ENCODE measurements at regions of chr1 and their contacts with region 1.

Region 1: GRCh38 chr1:230632273-230632873 is 9.9 kb upstream of the COG2 start:
- DNase-seq: peak; percentile 85
- ATAC-seq: peak; percentile 95
- H3K4me3 ChIP-seq: no peak overlapping the region
- H3K27ac ChIP-seq: no peak overlapping the region
- H3K4me1 ChIP-seq: no peaks in the 10 kb centered on the region
- H3K27me3 ChIP-seq: peaks cover 47% of the 10 kb centered on the region
- CTCF ChIP-seq: peak; percentile 98

Region 2: GRCh38 chr1:229607370-229607769 is 1025.0 kb before region 1 on chr1:
- CTCF ChIA-PET with region 1: no interaction called
- POLR2A ChIA-PET with region 1: no interaction called
- intact Hi-C with region 1: no loop called
- DNase-seq: no peak
- ATAC-seq: no peak
- H3K4me3 ChIP-seq: no peak overlapping the region
- H3K27ac ChIP-seq: no peak overlapping the region
- H3K4me1 ChIP-seq: no peaks in the 10 kb centered on the region
- H3K27me3 ChIP-seq: no peaks in the 10 kb centered on the region
- CTCF ChIP-seq: no peak

Region 3: GRCh38 chr1:230744382-230744781 is 112.0 kb after region 1 on chr1:
- CTCF ChIA-PET with region 1: no interaction called
- POLR2A ChIA-PET with region 1: no interaction called
- intact Hi-C with region 1: loop called (anchors 1 kb)
- DNase-seq: peak; percentile 79
- ATAC-seq: peak; percentile 53
- H3K4me3 ChIP-seq: no peak overlapping the region
- H3K27ac ChIP-seq: no peak overlapping the region
- H3K4me1 ChIP-seq: peaks cover 23% of the 10 kb centered on the region
- H3K27me3 ChIP-seq: no peaks in the 10 kb centered on the region
- CTCF ChIP-seq: no peak

Region 4: GRCh38 chr1:230781594-230781993 is 149.2 kb after region 1 on chr1:
- CTCF ChIA-PET with region 1: no interaction called
- POLR2A ChIA-PET with region 1: no interaction called
- intact Hi-C with region 1: no loop called
- DNase-seq: peak; percentile 22
- ATAC-seq: no peak
- H3K4me3 ChIP-seq: no peak overlapping the region
- H3K27ac ChIP-seq: no peak overlapping the region
- H3K4me1 ChIP-seq: no peaks in the 10 kb centered on the region
- H3K27me3 ChIP-seq: peaks cover 40% of the 10 kb centered on the region
- CTCF ChIP-seq: no peak

Region 5: DNA sequence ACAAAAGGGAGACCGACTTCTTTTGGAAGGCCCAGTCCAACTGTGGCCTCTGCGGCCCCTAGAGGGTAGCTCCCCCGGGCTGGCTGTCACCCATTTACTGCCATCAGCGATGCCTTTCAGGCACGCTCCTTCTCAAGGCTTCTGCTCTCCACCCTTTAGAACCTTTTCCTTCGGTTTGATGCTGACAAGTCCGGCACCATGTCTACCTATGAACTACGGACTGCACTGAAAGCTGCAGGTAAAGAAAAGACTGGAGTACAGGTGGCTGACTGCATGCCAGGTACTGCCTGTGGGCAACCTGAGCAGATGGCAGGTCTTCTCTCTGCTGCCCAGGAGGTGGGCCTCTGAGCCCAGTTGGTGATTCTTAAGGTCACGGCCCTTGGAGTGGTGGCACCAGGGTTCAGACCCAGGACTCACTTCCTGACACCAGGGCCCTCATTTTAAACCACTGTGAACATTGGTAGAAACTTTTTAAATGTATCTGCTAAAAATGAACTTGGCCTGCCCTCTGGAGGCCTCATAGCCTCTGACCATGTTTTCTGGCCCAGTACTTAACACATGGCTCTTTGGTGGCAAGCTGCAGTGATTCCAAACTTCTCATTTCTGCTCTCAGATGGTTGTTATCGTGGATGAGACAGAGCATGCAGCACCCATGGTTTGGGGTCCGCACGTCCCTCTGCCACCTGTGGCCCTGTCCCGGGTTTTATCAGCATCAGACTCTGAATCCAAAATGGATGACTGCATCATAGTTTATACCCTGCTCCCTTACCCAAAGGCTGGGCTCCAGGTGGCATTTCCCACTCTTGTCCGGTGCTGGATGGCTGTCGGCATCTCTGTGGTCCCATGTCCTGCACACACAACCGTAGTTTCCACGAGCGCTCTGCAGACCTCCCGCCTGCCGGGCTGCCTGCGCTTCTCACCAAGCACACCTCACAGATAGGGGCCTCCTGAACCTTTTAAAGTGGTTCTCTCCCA is 160.6 kb after region 1 on chr1:
- CTCF ChIA-PET with region 1: no interaction called
- POLR2A ChIA-PET with region 1: no interaction called
- intact Hi-C with region 1: loop called (anchors 1 kb)
- DNase-seq: peak; percentile 50
- ATAC-seq: peak; percentile 31; the same call in 1 of the 2 replicates
- H3K4me3 ChIP-seq: no peak overlapping the region
- H3K27ac ChIP-seq: no peak overlapping the region
- H3K4me1 ChIP-seq: no peaks in the 10 kb centered on the region
- H3K27me3 ChIP-seq: peaks cover 22% of the 10 kb centered on the region
- CTCF ChIP-seq: peak; percentile 67

Measured in PC-3 (cell line).